Activated B cell treated with CpG ODN at 0.5 μM for 24 hours (primary cell): ENCODE measurements at regions of chr5 and their contacts with region 1.

Region 1: DNA sequence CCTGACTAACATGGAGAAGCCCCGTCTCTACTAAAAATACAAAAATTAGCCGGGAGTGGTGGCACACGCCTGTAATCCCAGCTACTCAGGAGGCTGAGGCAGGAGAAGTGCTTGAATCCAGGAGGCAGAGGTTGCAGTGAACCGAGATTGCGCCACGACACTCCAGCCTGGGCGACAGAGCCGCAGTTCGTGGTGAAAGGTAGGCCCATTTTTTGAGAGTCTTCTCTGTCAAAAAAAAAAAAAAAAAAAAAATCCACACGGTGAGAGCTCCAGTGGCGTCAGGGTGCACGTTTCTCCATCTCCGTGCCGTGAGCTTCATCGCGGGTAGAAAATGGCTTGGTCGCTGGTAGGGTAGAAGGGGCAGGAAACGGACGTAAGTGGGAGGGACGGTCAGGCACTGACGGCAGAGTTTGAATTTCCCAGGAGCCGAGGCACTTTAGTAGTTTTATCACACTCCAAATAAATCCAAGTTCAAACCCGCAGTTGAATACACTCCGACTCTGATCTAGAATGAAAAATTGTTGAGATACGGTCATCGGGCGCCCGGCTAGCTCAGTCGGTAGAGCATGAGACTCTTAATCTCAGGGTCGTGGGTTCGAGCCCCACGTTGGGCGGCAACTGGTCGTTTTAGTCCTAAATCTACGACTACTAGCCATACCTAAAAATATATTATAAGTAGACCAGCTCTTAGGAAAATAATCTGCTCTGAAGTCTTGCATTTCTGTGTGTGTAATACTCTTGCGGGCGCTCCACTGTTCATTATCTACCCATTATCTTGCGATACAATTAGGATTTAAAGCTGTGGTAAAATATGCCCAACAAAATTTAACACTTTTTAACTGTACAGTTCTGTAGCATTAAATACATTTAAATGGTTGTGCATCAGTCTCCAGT is 2.5 kb upstream of the TRIM7 start:
- DNase-seq: peak; percentile 56
- ATAC-seq: peak; percentile 62
- H3K4me3 Mint-ChIP-seq: peak overlapping the region; percentile 92
- H3K27ac Mint-ChIP-seq: peak overlapping the region; percentile 97
- H3K4me1 Mint-ChIP-seq: peaks cover 34% of the 10 kb centered on the region
- H3K27me3 Mint-ChIP-seq: peaks cover 15% of the 10 kb centered on the region
- CTCF ChIP-seq: no peak

Region 2: DNA sequence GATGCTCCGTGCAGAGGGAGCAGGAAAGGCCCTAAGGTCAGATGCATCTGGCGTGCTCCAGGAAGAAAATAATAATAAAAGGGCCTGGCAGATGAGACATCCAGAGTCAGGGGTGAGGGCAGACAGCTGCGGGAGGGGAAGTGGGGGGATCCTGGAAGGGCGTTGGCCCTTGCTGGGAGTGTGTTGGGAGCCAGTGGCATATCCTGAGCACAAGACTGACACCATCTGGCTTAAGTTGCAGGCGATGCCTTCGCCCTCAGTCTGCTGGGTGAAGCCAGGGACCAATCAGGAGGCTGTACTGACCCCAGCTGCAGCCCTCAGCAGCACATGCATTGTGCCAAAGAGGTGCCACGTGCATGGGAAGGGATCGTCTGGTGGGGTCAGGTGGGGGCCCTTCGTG is 56.3 kb before region 1 on chr5:
- CTCF ChIA-PET with region 1: no interaction called
- POLR2A ChIA-PET with region 1: no interaction called
- intact Hi-C with region 1: no loop called
- DNase-seq: no peak
- ATAC-seq: no peak
- H3K4me3 Mint-ChIP-seq: no peak overlapping the region
- H3K27ac Mint-ChIP-seq: no peak overlapping the region
- H3K4me1 Mint-ChIP-seq: no peaks in the 10 kb centered on the region
- H3K27me3 Mint-ChIP-seq: peaks cover 43% of the 10 kb centered on the region
- CTCF ChIP-seq: no peak

Region 3: DNA sequence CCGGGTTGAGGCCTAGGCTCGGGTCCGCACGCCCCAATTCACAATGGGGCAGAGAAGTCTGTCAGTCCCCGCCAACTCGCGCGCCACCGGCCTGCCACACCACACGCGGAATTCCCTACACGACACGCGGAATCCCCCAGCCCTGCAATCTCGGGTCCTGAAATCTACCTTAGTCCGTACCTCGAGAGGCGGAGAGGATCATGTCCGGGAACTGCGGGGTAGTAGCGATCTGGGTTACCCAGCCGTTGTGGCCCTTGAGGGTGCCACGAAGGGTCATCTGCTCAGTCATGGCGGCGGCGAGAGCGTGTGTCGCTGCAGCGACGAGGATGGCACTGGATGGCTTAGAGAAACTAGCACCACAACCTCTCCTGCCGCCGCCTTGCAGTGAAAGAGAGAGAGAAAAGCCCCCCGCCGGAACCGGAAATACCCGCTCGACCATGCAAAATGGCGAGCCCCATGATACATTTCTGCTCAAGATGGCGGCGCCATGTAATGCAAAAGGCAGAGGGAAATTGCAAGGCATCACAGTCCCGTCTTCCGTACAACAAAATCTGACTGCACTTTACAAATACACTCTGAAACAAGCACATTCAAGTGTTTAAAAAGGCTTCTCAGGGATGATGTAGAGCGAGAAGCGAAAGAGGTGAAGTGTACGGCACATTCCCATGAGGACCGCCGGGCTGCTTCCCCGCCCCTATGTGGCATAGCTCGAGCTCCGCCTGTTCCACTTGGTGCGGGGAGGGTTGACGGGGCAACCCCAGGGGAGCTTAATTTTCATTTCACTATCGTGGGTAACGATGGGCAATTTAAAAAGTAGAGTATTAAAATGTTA is 36.3 kb after region 1 on chr5 and contains the start of gene RACK1:
- CTCF ChIA-PET with region 1: interaction called, 5 read pairs
- POLR2A ChIA-PET with region 1: interaction called, 11 read pairs
- intact Hi-C with region 1: loop called (anchors 5 kb)
- DNase-seq: peak; percentile 79
- ATAC-seq: peak; percentile 79
- H3K4me3 Mint-ChIP-seq: peak within 1 kb of the TSS; percentile 96
- H3K27ac Mint-ChIP-seq: peak within 1 kb of the TSS; percentile 98
- H3K4me1 Mint-ChIP-seq: peaks cover 73% of the 10 kb centered on the region
- H3K27me3 Mint-ChIP-seq: no peaks in the 10 kb centered on the region
- CTCF ChIP-seq: no peak
- total RNA-seq, gene RACK1: 2,528 and 2,812 TPM in 2 replicates